HEK293 (cell line): ENCODE measurements at regions of chr2 and their contacts with region 1.

Region 1: DNA sequence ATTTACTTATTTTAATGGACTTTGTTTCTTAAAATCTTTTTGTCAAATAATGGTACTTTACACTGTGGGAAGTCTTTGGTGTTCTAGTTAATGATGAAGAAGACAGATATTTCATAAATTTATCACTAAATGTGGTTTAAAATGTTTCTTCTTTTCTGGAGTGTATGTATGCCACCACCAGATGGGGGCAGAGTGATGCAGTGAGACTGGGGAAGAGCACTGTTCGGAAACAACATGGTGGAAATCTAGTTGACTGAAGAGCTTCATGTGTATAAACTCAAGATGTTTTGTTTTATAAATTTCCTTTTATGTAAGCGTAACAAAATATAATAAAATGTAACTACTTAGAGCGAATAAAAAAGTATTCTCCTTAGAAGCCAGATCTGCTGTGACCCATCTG is 195.1 kb downstream of the KCNE4 start:
- H3K4me3 ChIP-seq: no peak overlapping the region
- H3K27ac ChIP-seq: no peak overlapping the region
- H3K4me1 ChIP-seq: no peaks in the 10 kb centered on the region
- CTCF ChIP-seq: no peak

Region 2: DNA sequence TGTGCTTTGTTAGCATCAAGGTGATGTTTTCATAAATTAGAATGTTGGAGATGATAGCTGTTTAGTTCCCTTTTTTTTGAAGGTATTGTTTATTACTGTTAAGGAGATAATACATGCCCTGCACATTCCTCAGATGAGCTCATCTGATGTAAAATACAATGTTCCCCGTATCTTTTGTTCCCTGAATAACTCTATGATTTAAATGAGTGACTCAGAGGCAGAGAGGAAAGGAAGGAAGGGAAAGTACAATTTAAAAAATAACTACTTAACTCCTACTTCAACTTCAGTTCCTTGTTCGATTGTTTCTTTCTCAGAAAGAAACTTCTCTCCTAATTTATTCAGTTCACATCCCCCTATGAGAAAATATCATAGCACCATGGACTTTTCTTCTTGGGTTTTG is 13.5 kb after region 1 on chr2:
- CTCF ChIA-PET with region 1: interaction called, 11 read pairs
- POLR2A ChIA-PET with region 1: no interaction called
- H3K4me3 ChIP-seq: no peak overlapping the region
- H3K27ac ChIP-seq: no peak overlapping the region
- H3K4me1 ChIP-seq: no peaks in the 10 kb centered on the region
- CTCF ChIP-seq: no peak